Calu3 (cell line): ENCODE measurements at regions of chr3 and their contacts with region 1.

Region 1: DNA sequence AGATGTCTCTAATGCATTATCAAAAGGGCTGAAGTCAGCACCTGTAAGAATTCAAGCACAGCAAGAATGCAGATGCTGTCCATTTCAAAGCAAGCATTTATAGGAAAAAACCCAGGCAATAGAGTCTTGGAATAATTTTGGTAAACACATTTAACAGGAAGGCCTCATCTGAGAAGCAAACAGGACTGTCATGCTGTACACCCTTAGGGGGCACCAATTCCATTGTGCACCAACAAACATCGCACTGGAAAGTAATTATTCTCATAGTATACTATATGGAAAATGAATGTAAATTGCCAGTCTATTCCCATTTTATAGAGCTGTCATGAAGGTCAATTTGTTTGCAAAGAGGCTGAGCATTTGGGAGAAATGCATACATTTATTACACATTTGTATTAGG is 247.3 kb upstream of the SUCLG2 start:
- DNase-seq: no peak
- H3K4me3 Mint-ChIP-seq: no peak overlapping the region
- H3K27ac Mint-ChIP-seq: no peak overlapping the region
- H3K4me1 Mint-ChIP-seq: no peaks in the 10 kb centered on the region
- H3K27me3 Mint-ChIP-seq: no peaks in the 10 kb centered on the region
- CTCF ChIP-seq: no peak

Region 2: GRCh38 chr3:68256635-68257223 is 355.0 kb after region 1 on chr3:
- CTCF ChIA-PET with region 1: no interaction called
- intact Hi-C with region 1: loop called (anchors 10 kb)
- DNase-seq: no peak
- H3K4me3 Mint-ChIP-seq: no peak overlapping the region
- H3K27ac Mint-ChIP-seq: no peak overlapping the region
- H3K4me1 Mint-ChIP-seq: no peaks in the 10 kb centered on the region
- H3K27me3 Mint-ChIP-seq: no peaks in the 10 kb centered on the region
- CTCF ChIP-seq: no peak

Region 3: DNA sequence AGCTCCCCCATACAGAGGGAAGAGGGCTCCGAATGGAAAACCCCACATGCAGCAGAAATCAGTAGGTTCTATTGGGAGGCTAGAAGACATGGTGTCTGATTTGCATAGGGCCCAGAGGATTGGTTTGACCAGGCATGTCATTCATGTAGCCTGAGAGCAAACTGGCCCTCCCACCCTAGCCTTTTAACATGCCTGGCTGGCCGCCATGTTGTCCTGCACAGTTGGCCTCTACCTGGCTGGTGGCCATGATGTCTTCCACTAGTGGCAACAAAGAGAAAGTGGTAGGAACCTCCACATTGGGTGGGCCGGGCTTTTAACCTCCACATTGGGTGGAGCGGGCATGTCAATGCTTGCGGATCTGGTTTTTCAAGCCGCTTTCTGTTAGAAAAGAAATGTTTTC is 718.5 kb after region 1 on chr3:
- CTCF ChIA-PET with region 1: no interaction called
- intact Hi-C with region 1: loop called (anchors 10 kb)
- DNase-seq: no peak
- H3K4me3 Mint-ChIP-seq: no peak overlapping the region
- H3K27ac Mint-ChIP-seq: no peak overlapping the region
- H3K4me1 Mint-ChIP-seq: no peaks in the 10 kb centered on the region
- H3K27me3 Mint-ChIP-seq: no peaks in the 10 kb centered on the region
- CTCF ChIP-seq: no peak